Adrenal gland (tissue), 19 donors: ENCODE measurements at regions of chr6 and their contacts with region 1.

Region 1: DNA sequence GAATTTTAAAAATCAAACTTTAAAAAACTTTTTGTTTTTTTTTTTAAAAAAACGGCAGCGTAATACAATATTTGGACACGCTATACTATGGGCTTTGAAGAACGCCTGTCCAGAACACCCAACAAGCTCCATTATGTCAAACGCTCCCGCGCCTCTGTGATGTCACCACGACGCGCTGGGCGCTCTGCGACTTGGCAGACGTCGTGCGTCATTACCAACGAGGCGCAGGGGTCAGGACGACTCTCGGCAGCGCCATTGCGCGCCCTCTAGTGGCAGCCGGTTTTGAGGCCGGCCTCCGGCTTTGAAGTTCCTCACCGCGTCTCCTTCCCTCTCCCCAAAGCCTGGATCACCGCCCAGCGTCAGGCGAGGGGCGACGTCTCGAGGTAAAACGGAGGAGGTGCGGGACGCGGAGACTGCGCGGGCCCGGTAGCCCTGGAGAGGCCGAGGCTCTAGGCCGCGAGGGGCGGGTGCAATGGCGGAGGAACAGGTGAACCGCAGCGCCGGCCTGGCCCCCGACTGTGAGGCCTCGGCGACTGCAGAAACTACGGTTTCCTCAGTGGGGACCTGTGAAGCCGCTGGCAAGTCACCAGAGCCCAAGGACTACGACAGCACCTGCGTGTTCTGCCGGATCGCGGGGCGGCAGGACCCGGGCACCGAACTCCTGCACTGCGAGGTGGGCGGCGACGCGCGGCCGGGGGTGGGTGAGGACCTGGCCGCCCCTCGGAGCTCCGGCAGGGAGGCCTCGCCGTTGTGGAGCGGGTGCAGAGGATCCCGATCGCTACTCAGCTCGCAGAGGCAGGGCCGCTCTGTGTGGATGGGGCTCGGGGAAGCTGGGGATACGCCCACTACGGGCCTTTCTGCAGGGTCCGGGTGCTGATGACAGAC is at the start of gene HINT3:
- DNase-seq: peak; percentile 97 to 99 (median 98)
- H3K4me3 ChIP-seq: peak within 1 kb of the TSS; percentile 79 to 94 (median 84)
- H3K27ac ChIP-seq: peak within 1 kb of the TSS; percentile 88 to 98 (median 96)
- H3K4me1 ChIP-seq: peaks cover 16 to 27% of the 10 kb centered on the region in 2 donors
- H3K27me3 ChIP-seq: no peaks in the 10 kb centered on the region
- CTCF ChIP-seq: peak; percentile 96 to 99 (median 98)
- POLR2A ChIP-seq: peak in 1 of 2 donors; percentile 58
- total RNA-seq, gene HINT3: 23.4 to 39.3 (median 30.4) TPM

Region 2: GRCh38 chr6:125314019-125314581 is 642.6 kb before region 1 on chr6:
- intact Hi-C with region 1: loop called in 1 of 2 experiments (anchors 10 kb)
- DNase-seq: peak; percentile 55 to 83 (median 72)
- H3K4me3 ChIP-seq: no peak overlapping the region
- H3K27ac ChIP-seq: no peak overlapping the region
- H3K4me1 ChIP-seq: no peaks in the 10 kb centered on the region
- H3K27me3 ChIP-seq: no peaks in the 10 kb centered on the region
- CTCF ChIP-seq: peak; percentile 52 to 87 (median 74)
- POLR2A ChIP-seq: no peak

Region 3: DNA sequence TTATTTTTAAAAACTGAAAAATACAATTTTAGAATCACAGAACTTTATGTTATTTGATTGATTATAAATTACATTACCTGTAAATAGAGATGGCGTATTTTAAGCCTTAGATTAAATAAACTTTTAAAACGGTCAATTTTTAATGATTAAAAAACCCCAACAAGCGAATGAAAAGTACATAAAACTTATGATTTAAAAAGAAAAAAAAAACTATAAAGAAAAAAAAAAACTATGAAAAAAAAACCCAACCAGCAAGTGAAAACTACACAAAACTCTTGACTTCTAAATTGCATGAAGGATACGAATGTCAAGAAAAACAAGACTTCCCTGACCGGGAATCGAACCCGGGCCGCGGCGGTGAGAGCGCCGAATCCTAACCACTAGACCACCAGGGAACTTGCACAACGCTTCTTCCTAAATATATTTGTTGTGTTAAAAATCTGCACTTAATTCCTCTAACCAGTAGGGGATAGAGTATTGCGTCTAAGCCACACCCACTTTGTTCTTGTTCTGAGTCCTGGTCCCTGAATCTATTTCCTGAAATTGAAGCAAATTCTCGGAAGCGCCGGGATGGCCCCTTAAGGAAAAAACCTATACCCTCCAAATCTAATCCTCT is 176.7 kb before region 1 on chr6:
- intact Hi-C with region 1: loop called in 1 of 2 experiments (anchors 10 kb)
- DNase-seq: peak; percentile 83 to 95 (median 89)
- H3K4me3 ChIP-seq: peak overlapping the region in 3 of 4 donors; percentile 37 to 71 (median 62)
- H3K27ac ChIP-seq: peak overlapping the region; percentile 89 to 98 (median 97)
- H3K4me1 ChIP-seq: peaks cover 9 to 11% of the 10 kb centered on the region in 2 donors
- H3K27me3 ChIP-seq: no peaks in the 10 kb centered on the region
- CTCF ChIP-seq: peak; percentile 11 to 77 (median 66)
- POLR2A ChIP-seq: peak; percentile 21 to 63

Region 4: GRCh38 chr6:125906158-125906998 is 50.4 kb before region 1 on chr6:
- intact Hi-C with region 1: loop called in 1 of 2 experiments (anchors 5 kb)
- DNase-seq: peak in 6 of 7 donors; percentile 30 to 69 (median 41)
- H3K4me3 ChIP-seq: no peak overlapping the region
- H3K27ac ChIP-seq: no peak overlapping the region
- H3K4me1 ChIP-seq: peaks cover 5 to 9% of the 10 kb centered on the region in 2 donors
- H3K27me3 ChIP-seq: no peaks in the 10 kb centered on the region
- CTCF ChIP-seq: peak; percentile 31 to 65 (median 59)
- POLR2A ChIP-seq: no peak